Ascending aorta (tissue), 2 donors: ENCODE measurements at regions of chr9 and their contacts with region 1.

Region 1: DNA sequence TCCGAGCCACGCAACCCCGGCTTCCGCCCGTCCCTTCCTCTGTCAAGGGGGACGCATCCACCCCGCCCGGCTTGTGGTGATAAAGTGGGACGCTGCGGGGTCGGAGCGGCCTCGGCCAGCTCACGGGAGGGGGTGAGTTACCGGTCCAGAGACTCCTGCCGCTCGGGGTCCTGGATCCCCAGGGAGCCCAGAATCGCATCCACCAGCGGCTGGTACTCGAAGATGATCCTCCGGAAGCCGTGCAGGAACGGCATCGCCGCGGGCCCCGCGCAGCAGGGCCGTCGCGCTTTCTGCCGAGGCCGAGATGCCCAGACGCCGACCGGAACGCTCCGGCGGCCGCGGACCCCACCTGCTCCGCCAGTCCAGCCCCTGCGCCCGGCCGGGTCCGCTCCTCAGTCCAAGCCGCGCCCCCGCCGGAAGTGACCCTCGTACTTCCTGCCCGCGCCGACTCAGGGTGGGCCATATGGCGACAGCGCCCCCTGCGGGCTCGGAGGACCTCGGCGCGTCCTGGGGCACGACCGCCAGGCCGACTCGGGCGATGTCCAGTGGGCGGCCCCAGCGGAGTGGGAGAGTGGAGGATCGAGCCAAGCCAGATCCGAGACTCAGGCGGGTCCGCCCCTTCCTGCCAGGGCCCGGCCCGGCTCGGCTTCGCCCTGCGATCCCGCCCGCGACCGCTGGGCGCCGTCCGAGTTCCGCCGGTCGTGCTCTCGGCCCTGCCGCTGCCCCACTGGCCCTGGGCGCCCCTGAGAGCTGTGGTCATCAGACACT is at the start of gene ASB6:
- DNase-seq: peak; percentile 90 to 99
- H3K4me3 ChIP-seq: peak within 1 kb of the TSS; percentile 52 to 85
- H3K27ac ChIP-seq: peak within 1 kb of the TSS; percentile 84 to 89
- H3K4me1 ChIP-seq: peaks cover 13 to 23% of the 10 kb centered on the region in 2 donors
- H3K27me3 ChIP-seq: no peaks in the 10 kb centered on the region
- CTCF ChIP-seq: peak; percentile 97 to 100 (median 100)
- total RNA-seq, gene ASB6: 29.7 TPM

Region 2: DNA sequence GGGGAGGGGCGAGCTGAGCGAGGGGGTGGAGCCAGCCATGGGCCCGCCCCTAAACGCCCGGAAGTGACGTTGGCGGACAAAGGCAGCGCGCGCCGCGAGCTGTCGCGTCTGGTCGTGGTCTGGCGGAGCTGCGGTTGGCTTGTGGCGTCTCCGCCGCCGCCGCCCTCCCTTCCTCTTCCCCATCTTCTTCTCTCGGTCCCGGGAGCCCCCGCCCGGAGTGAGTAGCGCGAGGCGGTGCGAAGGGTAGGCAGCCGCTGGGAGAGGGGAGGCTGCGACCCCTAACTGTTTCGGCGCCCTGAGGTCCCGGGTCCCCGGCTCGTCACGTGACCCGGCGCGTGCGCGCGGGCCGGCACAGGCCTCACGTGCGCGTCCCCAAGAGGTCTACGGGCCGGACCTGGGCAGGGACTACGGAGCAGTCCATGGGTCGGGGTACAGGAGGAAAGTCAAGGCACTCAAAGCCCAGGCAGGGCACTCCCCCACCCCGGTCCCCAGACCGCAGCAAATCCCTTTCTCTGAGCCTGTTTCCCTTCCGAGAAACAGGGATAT is 15.8 kb before region 1 on chr9 and contains the start of gene NTMT1:
- intact Hi-C with region 1: loop called (anchors 1 kb)
- DNase-seq: peak; percentile 43 to 93
- H3K4me3 ChIP-seq: peak within 1 kb of the TSS; percentile 70 to 97
- H3K27ac ChIP-seq: peak within 1 kb of the TSS; percentile 81 to 97
- H3K4me1 ChIP-seq: peaks cover 4 to 22% of the 10 kb centered on the region in 2 donors
- H3K27me3 ChIP-seq: no peaks in the 10 kb centered on the region
- CTCF ChIP-seq: no peak
- total RNA-seq, gene NTMT1: 6.9 TPM

Region 3: GRCh38 chr9:129665389-129665775 is 23.5 kb after region 1 on chr9 and contains the start of gene PRRX2:
- intact Hi-C with region 1: loop called (anchors 2 kb)
- DNase-seq: peak in 1 of 2 donors; percentile 77
- H3K4me3 ChIP-seq: peak within 1 kb of the TSS; percentile 59 to 76
- H3K27ac ChIP-seq: peak within 1 kb of the TSS; percentile 68 to 74
- H3K4me1 ChIP-seq: peaks cover 0 to 30% of the 10 kb centered on the region in 2 donors
- H3K27me3 ChIP-seq: no peaks in the 10 kb centered on the region
- CTCF ChIP-seq: no peak
- total RNA-seq, gene PRRX2: 112 TPM

Region 4: GRCh38 chr9:129696938-129697650 is 55.2 kb after region 1 on chr9:
- intact Hi-C with region 1: loop called (anchors 2 kb)
- DNase-seq: peak; percentile 46 to 92
- H3K4me3 ChIP-seq: peak overlapping the region; percentile 47 to 51
- H3K27ac ChIP-seq: peak overlapping the region; percentile 94 to 97
- H3K4me1 ChIP-seq: peaks cover 25 to 48% of the 10 kb centered on the region in 2 donors
- H3K27me3 ChIP-seq: no peaks in the 10 kb centered on the region
- CTCF ChIP-seq: peak in 1 of 3 experiments; percentile 12

Region 5: GRCh38 chr9:129726322-129727160 is 84.6 kb after region 1 on chr9:
- intact Hi-C with region 1: loop called (anchors 1 kb)
- DNase-seq: peak in 1 of 2 donors; percentile 88
- H3K4me3 ChIP-seq: peak overlapping the region in 1 of 2 donors; percentile 27
- H3K27ac ChIP-seq: peak overlapping the region; percentile 73 to 95
- H3K4me1 ChIP-seq: peaks cover 15 to 26% of the 10 kb centered on the region in 2 donors
- H3K27me3 ChIP-seq: no peaks in the 10 kb centered on the region
- CTCF ChIP-seq: peak; percentile 93 to 97 (median 96)

Region 6: DNA sequence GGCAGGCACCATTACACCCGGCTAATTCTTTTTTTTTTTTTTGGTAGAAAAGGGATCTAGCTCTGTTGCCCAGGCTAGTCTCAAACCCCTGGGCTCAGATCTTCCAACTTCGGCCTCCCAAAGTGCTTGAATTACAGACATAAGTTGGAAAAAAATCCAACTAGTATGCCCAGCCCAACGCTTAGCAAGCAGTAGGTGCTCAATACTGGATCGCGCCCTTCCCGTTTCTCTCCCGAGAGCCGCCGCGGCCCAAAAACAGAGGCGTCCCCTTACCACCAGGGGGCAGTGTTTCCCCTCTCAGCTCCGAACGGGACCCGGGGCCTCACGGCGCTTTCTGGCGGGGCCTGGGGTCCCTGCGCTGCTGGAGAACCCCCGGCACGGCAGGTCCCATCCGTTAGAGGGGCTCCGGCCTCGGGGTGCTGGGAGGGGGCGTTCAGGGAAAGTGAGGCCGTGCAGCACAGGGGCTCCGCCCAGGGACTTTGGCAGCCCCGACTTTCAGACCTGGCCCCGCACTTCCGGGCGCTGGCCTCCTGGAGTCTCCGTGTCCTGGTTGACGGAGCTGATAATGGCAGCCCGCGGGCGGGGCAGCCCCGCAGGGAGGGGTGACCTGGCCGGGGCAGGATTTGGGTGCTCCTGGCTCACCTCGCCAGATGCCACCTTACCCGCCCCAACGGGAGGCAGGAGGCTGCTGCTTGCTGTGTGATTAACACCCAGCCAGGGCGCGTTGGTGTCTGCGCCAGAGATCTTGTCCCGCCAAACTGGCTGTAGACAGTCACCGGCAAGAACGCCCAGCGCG is 95.7 kb after region 1 on chr9:
- intact Hi-C with region 1: loop called (anchors 1 kb)
- DNase-seq: peak in 1 of 2 donors; percentile 92
- H3K4me3 ChIP-seq: peak overlapping the region; percentile 49 to 82
- H3K27ac ChIP-seq: peak overlapping the region; percentile 47 to 68
- H3K4me1 ChIP-seq: no peaks in the 10 kb centered on the region
- H3K27me3 ChIP-seq: no peaks in the 10 kb centered on the region
- CTCF ChIP-seq: peak; percentile 95 to 97 (median 97)

Region 7: GRCh38 chr9:129783516-129784361 is 141.8 kb after region 1 on chr9:
- intact Hi-C with region 1: loop called (anchors 1 kb)
- DNase-seq: peak in 1 of 2 donors; percentile 89
- H3K4me3 ChIP-seq: no peak overlapping the region
- H3K27ac ChIP-seq: no peak overlapping the region
- H3K4me1 ChIP-seq: no peaks in the 10 kb centered on the region
- H3K27me3 ChIP-seq: no peaks in the 10 kb centered on the region
- CTCF ChIP-seq: peak; percentile 84 to 92 (median 92)